GM18951 (cell line): ENCODE measurements at regions of chr2 and their contacts with region 1.

Region 1: GRCh38 chr2:142989273-142990204 is 112.1 kb downstream of the KYNU start:
- POLR2A ChIP-seq: no peak

Region 2: DNA sequence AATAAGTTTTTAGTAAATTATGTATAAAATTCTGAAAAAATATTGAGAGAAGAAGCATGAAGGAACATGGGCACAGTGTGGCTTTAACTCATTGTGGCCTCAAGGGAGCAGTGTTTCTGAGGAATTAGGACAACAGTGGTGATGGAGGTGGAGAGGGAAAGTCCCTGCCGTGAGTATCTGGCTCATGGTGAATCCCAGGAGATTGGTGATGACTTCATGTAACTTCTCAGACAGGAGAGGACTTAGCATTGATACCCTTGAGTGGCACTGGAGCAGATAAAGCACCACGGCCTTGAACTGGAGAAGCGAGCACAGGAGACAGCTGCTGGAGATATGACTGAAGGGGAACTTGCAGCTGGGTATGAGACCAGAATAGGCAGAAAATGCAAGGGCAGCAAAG is 823.7 kb before region 1 on chr2:
- in situ Hi-C with region 1: loop called (anchors 25 kb)
- POLR2A ChIP-seq: no peak

Region 3: GRCh38 chr2:142682528-142682927 is 307.0 kb before region 1 on chr2:
- in situ Hi-C with region 1: loop called (anchors 25 kb)
- POLR2A ChIP-seq: no peak